ENCODE measurements at regions of chr4 and their contacts with region 1.

Region 1: DNA sequence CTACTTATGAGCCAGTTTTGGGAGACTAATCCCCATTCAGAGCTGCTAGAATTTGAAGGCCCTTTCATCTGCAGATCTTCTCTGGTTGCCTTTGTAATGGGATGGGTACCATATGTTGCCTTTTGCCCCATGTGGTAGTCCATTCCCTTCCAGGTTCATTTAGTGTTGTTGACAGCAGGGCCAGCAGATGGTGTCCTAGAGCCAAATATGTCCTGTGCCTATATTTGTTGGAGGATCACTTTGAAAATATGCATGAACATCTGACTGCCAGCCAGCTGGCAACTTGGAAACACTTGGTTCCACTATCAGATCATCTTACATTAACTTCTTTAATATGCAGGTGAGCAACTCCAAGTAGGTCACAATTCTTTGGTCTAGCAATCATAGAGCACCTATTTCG is 30.4 kb downstream of the CFAP299 start:
- DNase-seq: no peak

Region 2: DNA sequence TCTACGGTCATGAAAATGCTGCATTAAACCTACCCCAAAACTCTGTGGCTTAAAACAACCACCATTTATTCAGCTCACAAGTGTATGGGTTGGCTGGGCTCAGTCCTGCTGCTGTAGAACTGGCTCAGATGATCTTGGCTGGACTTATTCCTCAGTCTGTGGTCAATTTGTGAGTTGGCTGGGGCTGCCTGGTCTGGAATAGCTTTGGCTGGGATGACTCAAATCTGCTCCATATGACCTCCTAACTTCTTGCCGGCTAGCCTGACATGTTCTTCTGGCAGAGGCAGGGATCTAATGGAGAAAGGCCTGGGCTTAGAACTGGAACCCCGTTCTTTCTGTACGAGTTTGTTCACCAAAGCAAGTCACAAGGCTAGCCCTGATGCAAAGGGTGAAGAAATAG is 41.3 kb after region 1 on chr4:
- intact Hi-C with region 1: no loop called
- DNase-seq: no peak

Region 3: GRCh38 chr4:80989921-80990544 is 624.1 kb after region 1 on chr4:
- intact Hi-C with region 1: loop called (anchors 5 kb)
- DNase-seq: no peak

Region 4: GRCh38 chr4:81039351-81039972 is 673.5 kb after region 1 on chr4:
- intact Hi-C with region 1: loop called (anchors 5 kb)
- DNase-seq: no peak

Region 5: DNA sequence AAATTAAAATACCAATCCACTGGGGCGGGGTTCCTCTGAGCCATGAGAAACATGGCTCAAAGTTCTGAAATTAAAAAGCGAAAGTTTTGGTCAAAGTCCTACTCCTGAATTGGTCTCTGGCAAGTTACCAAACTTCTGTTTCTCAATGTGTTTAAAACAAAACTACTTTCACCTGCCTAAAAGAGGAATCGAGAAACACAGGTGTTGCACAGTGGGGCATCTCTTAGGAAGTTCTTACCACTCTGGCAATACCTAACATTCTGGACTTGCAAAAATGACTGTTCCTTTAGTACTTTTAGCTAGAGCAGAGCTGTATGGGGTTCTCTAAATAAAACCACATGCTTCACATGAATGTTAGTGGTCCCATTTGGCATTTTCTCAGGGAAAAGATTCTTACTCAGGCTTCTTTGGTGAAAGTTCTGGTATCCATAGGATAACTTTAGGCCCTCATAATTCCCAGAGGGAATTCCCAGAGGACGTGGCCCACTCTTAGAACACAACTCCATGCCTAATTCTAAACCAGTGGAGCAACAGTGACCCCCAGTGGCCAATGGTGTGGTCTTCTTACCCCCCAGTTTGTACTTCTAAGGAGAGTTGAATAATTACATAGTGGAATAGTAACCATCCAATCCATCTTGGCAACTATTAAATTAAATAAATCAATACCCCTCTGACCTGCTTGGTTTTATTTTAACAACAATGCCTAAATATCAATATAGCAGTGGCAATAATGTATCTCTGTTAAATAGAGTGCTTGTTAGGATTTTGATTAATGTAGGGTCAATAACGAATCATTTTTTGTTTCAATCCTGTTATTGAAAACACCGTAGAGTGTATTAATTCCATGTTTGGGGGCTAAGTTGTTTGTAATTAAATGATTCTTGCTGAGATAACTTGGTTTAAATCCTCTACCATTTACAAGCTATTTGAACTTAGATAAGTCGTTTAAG is 686.5 kb after region 1 on chr4:
- intact Hi-C with region 1: loop called (anchors 5 kb)
- DNase-seq: no peak

Measured in cardiac septum (tissue), 1 donor.